ENCODE measurements at regions of chr6 and their contacts with region 1.

Region 1: DNA sequence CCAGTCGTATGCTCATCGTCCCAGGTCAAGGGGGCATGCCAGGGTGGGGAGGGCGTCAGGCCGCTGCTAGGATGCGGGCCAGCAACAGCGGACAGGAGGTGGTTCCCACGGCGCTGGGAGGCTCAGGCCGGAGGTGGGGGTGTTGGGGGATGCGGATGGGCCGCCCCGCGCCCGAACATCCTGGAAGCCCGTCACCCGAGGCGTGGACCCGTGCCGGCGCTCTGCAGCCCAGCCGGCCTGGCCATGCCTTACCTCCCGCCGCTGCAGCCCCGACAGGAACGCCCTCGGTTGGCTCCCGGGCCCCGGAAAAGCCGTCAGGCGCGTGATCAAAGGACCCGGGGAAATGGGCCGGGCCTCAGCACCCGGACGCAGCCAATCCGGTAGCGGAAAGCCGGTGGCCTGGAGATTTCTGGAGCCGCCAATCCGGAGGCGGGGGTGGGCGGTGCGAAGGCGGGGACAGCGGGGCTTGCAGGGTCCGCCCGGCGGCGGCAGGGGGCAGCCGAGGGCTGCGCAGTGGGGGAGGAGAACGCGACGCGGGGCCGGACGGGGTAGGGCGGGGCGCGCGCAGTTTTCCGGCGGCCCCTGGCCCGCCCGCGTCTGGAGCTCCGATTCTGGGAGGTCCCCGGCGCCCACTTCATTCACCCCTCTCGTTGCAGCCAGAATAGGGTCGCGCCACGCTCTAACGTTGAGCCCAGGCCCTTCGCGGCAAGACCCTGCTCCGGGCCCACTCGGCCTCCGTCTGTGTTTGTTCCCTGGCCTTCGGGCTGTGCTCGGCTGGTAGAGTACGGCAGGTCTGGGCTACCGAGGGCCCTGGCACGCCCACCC is at the start of gene SMIM29:
- DNase-seq: peak; percentile 87
- H3K4me3 ChIP-seq: peak within 1 kb of the TSS; percentile 91
- H3K27ac ChIP-seq: peak within 1 kb of the TSS; percentile 47
- H3K27me3 ChIP-seq: no peaks in the 10 kb centered on the region
- CTCF ChIP-seq: peak; percentile 80
- polyA plus RNA-seq, gene SMIM29: 11.3 and 17.2 TPM in 2 replicates

Region 2: DNA sequence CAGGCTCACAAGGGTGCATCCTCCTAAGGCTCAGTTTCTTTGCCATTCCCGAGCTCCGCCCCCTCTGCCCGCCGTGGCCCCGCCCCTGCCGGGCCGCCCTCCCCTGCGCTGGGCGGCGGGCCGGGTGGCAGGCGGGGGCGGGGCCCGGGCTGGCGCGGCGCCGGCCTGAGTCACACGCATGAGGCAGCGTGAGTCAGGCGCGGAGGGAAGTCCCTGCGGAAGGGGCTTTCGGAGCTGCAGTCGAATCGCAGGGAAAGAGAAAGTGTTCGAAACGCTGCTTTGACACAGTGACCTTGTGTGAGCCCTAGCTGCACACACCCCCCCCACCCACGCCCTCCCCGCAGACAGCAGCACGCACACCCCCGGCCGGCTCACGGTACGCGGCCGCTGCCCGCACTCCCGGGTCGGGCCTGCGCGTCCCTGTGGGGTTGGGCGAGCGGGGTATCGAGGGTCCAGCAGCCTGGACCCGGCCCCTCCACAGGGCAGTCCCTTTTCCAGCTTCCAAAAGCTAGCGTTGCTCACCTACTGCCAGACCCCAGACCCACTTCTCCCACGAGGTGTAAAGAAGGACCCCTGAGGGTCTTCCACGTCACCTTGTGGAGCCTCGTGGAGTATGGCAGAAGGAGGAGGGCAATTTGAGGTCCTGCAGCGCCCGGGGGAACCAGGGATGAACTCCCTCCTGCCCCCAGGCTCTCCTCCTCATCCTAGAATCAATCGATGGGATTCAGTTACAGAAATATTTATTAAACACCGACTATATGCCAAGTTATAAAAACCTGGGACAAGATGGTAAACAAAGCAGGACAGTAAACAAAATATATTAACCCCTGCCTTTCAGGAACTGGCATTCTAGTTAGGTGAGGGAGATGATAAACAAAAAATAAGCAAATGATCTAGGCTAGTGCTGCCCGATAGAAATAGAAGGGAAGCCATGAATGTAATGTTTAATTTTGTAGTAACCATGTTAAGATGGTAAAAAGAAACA is 24.7 kb before region 1 on chr6:
- CTCF ChIA-PET with region 1: interaction called, 8 read pairs
- POLR2A ChIA-PET with region 1: interaction called, 11 read pairs
- DNase-seq: peak; percentile 82
- H3K4me3 ChIP-seq: peak overlapping the region; percentile 55
- H3K27ac ChIP-seq: peak overlapping the region; percentile 95
- H3K27me3 ChIP-seq: no peaks in the 10 kb centered on the region
- CTCF ChIP-seq: no peak

Region 3: DNA sequence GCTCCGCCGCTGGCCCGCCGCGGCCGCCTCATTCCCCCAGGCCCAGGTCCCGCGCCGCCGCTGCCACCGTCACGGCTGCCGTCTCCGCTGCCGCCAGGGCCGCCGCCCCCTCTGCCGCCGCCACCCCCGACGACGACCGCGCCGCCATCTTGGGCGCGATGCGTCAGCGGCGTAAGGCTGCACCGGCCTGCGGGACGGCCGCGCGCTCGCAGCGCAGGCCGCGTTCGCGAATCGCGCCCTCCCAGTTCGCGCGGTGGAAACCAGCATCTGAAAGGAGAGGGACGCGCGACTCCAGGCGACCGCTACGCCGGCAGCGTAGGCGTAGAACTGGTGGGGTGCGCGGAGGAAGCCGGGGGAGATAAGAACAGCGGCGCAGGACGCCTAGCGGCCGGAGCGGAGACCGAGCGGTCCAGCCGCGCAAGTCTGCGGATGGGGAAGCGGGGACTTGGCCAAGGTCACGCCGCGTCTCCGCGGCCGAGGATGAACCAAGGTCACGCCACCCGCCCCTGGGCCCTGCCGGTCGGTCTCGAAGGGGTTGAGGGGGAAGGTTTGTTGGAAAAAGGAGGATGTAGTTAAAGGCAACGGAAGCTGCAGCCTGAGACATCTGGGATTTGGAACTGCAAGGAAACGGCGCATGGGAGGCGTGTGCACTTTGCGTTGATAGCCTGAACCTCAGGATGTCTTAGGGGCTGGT is 143.7 kb after region 1 on chr6 and contains the start of gene NUDT3:
- CTCF ChIA-PET with region 1: interaction called, 18 read pairs
- POLR2A ChIA-PET with region 1: interaction called, 3 read pairs
- DNase-seq: peak; percentile 83
- H3K4me3 ChIP-seq: peak within 1 kb of the TSS; percentile 77
- H3K27ac ChIP-seq: peak within 1 kb of the TSS; percentile 52
- H3K27me3 ChIP-seq: no peaks in the 10 kb centered on the region
- CTCF ChIP-seq: peak; percentile 88
- polyA plus RNA-seq, gene NUDT3: 23.7 and 26.7 TPM in 2 replicates

Region 4: GRCh38 chr6:34425498-34426410 is 176.8 kb after region 1 on chr6 and contains the start of gene RPS10:
- CTCF ChIA-PET with region 1: interaction called, 11 read pairs
- POLR2A ChIA-PET with region 1: interaction called, 11 read pairs
- DNase-seq: peak; percentile 75
- H3K4me3 ChIP-seq: peak within 1 kb of the TSS; percentile 99
- H3K27ac ChIP-seq: peak within 1 kb of the TSS; percentile 65
- H3K27me3 ChIP-seq: no peaks in the 10 kb centered on the region
- CTCF ChIP-seq: no peak; the same call in 1 of the 2 replicates
- polyA plus RNA-seq, gene RPS10: 2,426 and 3,003 TPM in 2 replicates

Region 5: DNA sequence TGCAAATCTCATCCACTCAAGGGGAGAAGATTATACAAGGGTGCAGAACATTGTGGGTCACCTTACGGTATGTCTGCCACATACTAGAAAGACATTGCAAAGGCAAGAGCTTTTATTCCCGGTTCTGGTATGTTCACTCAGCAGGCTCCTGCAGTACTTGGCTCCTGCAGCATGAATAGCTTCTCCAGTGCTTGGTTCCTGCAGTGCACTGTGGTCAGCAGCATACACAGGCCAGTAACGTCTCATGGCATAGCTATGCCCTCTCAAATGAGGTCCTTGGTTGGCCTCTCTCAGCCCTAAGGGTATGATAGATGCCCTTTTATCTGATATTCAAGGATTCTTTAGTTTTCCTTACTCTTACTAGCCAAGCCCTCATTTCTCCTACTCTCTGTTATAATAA is 879.6 kb after region 1 on chr6:
- CTCF ChIA-PET with region 1: interaction called, 11 read pairs
- POLR2A ChIA-PET with region 1: no interaction called
- DNase-seq: no peak
- H3K4me3 ChIP-seq: no peak overlapping the region
- H3K27ac ChIP-seq: no peak overlapping the region
- H3K27me3 ChIP-seq: peaks cover 12% of the 10 kb centered on the region
- CTCF ChIP-seq: no peak

Region 6: GRCh38 chr6:35452186-35453090 is 1203.5 kb after region 1 on chr6 and contains the start of gene FANCE:
- CTCF ChIA-PET with region 1: no interaction called
- POLR2A ChIA-PET with region 1: no interaction called
- DNase-seq: peak; percentile 74
- H3K4me3 ChIP-seq: peak within 1 kb of the TSS; percentile 75
- H3K27ac ChIP-seq: no peak within 1 kb of the TSS
- H3K27me3 ChIP-seq: no peaks in the 10 kb centered on the region
- CTCF ChIP-seq: no peak
- polyA plus RNA-seq, gene FANCE: 7.0 and 7.1 TPM in 2 replicates